ENCODE measurements at regions of chr4 and their contacts with region 1.

Region 1: DNA sequence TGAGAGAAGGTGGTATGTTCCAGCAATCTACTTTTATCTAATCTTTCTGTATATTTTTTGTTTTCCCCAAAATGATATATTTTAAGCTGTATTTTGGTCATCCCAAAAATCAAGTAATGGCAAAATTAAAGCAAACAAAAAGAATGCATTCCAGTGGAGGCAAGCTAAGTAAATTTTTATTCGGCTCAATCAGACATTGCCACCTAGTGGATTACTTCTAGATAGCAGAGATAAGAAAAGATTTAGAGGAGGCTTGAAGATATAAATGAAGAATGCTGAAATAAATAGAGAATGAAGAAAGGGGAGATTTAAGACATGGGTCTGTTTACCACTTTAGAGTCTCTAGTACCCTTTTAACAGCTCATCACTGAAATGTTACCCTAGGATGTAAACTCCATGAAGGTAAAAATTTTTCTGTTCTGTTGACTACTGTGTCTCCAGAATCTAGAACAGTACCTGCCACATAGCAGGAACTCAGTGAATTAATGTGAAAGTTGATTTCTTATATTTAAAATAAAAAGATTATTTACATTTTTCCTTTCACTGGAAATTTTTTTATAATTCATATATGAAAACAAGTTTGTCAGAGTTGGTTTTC is 110.9 kb upstream of the ANK2 start:
- DNase-seq: no peak
- ATAC-seq: no peak
- H3K4me3 ChIP-seq: no peak overlapping the region
- H3K27ac ChIP-seq: no peak overlapping the region
- H3K4me1 ChIP-seq: peaks cover 0 to 8% (median 0%) of the 10 kb centered on the region in 12 donors
- H3K27me3 ChIP-seq: no peaks in the 10 kb centered on the region
- CTCF ChIP-seq: peak; percentile 41 to 77 (median 62)
- POLR2A ChIP-seq: no peak

Region 2: DNA sequence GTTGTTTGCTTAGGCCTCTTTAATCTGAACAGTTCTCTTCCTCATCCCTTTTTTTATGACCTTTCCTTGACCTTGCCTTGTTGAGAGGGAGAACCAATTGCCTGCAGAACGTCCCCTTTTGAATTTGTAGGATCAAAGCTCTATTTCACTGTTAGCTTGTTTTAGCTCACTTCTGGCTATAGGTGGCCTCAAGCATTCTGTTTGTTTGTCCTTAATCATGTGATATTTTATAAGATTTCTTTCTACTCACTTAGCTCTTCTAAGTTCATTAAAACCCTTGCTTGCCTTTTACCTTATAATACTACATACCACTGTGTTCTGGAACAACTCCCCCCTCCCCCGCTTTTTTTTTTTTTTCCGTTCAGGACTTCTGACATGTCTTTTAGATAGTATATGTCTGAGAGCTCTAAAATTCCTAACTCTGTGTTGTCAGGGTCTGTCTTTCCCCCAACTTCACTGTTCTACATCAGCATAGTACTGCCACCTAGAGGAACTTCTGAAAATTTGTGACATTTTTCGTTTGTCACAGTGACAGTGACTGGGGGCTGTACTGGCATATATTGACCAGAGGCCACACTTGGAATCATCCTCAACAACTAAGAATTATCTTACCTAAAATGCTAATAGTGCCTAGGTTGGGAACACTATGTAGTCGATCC is 173.1 kb before region 1 on chr4:
- intact Hi-C with region 1: loop called in 9 of 10 experiments (anchors 5 to 10 kb)
- DNase-seq: no peak
- ATAC-seq: peak; percentile 39 to 56 (median 48)
- H3K4me3 ChIP-seq: no peak overlapping the region
- H3K27ac ChIP-seq: peak overlapping the region in 3 of 12 donors; percentile 31 to 50 (median 33)
- H3K4me1 ChIP-seq: peaks cover 0 to 5% (median 0%) of the 10 kb centered on the region in 12 donors
- H3K27me3 ChIP-seq: no peaks in the 10 kb centered on the region
- CTCF ChIP-seq: peak; percentile 19 to 56 (median 40)
- POLR2A ChIP-seq: no peak

Region 3: DNA sequence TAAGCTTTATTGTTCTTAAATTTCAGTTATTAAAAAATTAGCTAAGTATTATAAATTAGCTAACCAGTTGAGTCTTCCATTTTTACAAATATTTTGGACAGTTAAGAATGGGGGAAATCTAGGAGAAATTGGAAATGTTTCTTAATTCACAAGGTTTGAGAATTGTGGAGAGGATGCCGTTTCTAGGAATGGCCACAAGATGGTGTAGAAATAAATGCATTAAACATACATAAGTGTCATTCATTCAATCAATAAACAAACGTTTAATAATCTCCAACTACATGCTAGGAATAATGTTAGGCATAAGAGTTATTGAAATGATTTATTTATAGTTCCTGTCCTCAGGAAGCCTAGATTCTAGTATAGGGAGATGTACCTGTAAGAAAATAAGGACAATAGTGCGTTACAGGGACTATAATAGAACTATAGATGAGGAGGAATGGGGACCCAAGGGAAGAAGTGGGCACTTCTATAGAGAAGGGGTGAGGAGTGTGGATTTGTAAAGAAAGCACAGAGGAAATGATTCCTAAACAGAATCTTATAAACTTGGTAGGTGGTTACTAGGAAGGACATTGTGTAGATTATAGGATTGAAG is 84.8 kb before region 1 on chr4:
- intact Hi-C with region 1: loop called in 2 of 10 experiments (anchors 5 to 10 kb)
- DNase-seq: no peak
- ATAC-seq: no peak
- H3K4me3 ChIP-seq: no peak overlapping the region
- H3K27ac ChIP-seq: peak overlapping the region in 1 of 12 donors; percentile 63
- H3K4me1 ChIP-seq: peaks cover 0 to 28% (median 3%) of the 10 kb centered on the region in 12 donors
- H3K27me3 ChIP-seq: no peaks in the 10 kb centered on the region
- CTCF ChIP-seq: peak in 9 of 12 donors; percentile 5 to 45 (median 27)
- POLR2A ChIP-seq: no peak

Measured in heart left ventricle (tissue), 16 donors.